B cell (primary cell): ENCODE measurements at regions of chr5 and their contacts with region 1.

Region 1: DNA sequence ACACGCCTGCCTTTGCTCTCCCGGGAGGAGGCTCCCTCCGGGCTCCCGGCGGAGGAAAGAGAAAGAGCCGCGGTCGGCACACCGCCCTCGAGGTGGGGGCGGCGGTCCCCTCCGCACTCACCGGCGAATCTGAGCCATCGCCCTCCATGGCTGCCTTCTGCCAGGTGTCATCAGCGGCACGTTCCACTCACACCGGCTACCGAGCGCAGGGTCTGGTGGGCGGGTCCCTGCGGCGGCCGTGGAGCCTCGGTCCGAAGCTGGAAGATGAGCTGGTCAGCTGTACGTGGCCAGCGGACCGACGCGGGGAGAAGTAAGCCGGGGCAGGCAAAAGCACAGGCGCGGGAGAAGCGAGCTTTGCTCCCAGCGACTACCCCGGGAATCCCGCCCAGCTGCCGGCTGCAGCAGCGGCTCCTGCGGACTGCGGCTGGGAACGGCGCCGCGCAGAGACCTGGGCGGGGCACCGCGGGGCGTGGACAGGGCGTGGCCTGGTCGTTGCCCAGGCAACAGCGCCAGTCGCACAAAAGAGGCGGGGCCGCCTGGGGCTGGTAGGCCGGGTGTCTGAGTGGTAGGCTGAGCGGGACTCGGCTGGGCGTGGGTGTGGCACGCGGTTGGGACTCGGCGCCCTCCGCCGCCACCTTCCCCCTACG is at the start of gene TRIM36:
- DNase-seq: peak; percentile 94
- ATAC-seq: peak; percentile 92
- H3K4me3 ChIP-seq: peak within 1 kb of the TSS; percentile 53 to 89 (median 75)
- H3K4me3 Mint-ChIP-seq: peak within 1 kb of the TSS; percentile 92
- H3K27ac ChIP-seq: no peak within 1 kb of the TSS
- H3K27ac Mint-ChIP-seq: peak within 1 kb of the TSS; percentile 80
- H3K4me1 ChIP-seq: peaks cover 20 to 21% of the 10 kb centered on the region in 2 donors
- H3K4me1 Mint-ChIP-seq: peaks cover 14% of the 10 kb centered on the region
- H3K27me3 ChIP-seq: peaks cover 0 to 62% (median 32%) of the 10 kb centered on the region in 4 experiments
- H3K27me3 Mint-ChIP-seq: peaks cover 59% of the 10 kb centered on the region
- CTCF ChIP-seq: no peak
- total RNA-seq, gene TRIM36: 0.39 and 1.6 TPM in 2 replicates

Region 2: GRCh38 chr5:115180165-115180709 is 10.6 kb after region 1 on chr5:
- CTCF ChIA-PET with region 1: interaction called, 3 read pairs
- POLR2A ChIA-PET with region 1: interaction called, 4 read pairs
- intact Hi-C with region 1: loop called (anchors 1 kb)
- DNase-seq: peak; percentile 71
- ATAC-seq: peak; percentile 75
- H3K4me3 ChIP-seq: peak overlapping the region; percentile 4 to 64 (median 47)
- H3K4me3 Mint-ChIP-seq: peak overlapping the region; percentile 89
- H3K27ac ChIP-seq: no peak overlapping the region
- H3K27ac Mint-ChIP-seq: no peak overlapping the region
- H3K4me1 ChIP-seq: peaks cover 19 to 27% of the 10 kb centered on the region in 2 donors
- H3K4me1 Mint-ChIP-seq: peaks cover 8% of the 10 kb centered on the region
- H3K27me3 ChIP-seq: peaks cover 5 to 87% (median 64%) of the 10 kb centered on the region in 4 experiments
- H3K27me3 Mint-ChIP-seq: peaks cover 86% of the 10 kb centered on the region
- CTCF ChIP-seq: no peak

Region 3: DNA sequence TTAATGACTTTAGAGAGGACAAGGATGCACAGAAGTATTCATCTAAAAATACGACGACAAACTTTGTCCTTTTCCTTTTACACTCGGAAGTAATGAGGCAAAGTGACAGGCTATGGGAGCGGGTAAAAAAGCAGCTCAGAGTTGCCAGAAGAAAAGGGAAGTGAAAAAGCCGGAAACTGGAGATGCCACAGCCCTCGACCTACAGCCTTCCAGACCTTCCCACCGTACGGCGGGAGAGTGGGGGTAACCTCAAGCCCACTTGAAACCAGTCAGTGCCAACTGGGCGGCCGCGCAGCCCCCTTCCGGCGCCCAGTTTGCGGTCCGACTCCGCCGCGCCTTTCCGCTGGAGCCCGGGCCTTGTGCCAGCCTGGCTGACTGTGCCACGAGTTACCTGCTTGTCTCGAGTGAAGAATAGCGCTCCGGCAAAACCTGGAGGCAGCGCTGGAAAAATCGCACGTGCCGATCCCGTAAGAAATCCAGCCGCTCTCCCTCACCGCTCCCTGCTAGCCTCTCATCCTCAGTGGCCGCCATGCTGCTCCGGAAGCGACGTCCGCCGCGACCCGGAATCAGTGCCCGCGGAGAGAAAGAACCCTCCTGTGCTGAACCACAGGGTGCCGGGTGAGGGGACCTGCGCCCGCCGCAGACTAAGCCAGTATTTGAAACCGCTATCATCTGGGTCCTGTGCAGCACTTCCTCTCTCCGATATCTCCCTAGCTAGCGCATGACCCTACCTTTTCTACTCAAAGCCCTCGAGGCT is 92.9 kb after region 1 on chr5 and contains the start of gene PGGT1B:
- CTCF ChIA-PET with region 1: interaction called, 3 read pairs
- POLR2A ChIA-PET with region 1: no interaction called
- intact Hi-C with region 1: loop called (anchors 2 kb)
- DNase-seq: peak; percentile 84
- ATAC-seq: peak; percentile 90
- H3K4me3 ChIP-seq: peak within 1 kb of the TSS; percentile 78 to 97 (median 87)
- H3K4me3 Mint-ChIP-seq: peak within 1 kb of the TSS; percentile 92
- H3K27ac ChIP-seq: peak within 1 kb of the TSS; percentile 88 to 92
- H3K27ac Mint-ChIP-seq: peak within 1 kb of the TSS; percentile 92
- H3K4me1 ChIP-seq: peaks cover 20 to 26% of the 10 kb centered on the region in 2 donors
- H3K4me1 Mint-ChIP-seq: peaks cover 49% of the 10 kb centered on the region
- H3K27me3 ChIP-seq: no peaks in the 10 kb centered on the region
- H3K27me3 Mint-ChIP-seq: no peaks in the 10 kb centered on the region
- CTCF ChIP-seq: no peak
- total RNA-seq, gene PGGT1B: 63.4 and 64.8 TPM in 2 replicates

Region 4: DNA sequence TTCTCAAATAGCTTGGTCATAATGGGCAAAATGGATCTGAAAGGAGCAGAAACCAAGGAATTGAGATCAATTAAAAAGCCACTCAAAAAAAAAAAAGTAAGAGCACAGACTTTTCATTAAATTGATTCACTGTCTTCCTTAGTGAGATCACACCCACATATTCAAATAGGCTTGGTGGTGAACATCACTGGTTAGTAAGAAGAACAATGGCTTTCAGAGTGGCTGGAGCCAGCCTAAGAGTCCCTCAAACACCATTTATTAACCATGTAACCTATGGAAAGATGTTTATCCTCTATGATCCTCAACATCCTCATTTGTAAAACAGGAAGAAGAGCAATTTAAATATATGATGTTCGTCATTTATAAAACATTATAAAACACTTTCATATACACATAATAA is 114.4 kb after region 1 on chr5:
- CTCF ChIA-PET with region 1: no interaction called
- POLR2A ChIA-PET with region 1: no interaction called
- intact Hi-C with region 1: no loop called
- DNase-seq: no peak
- ATAC-seq: no peak
- H3K4me3 ChIP-seq: no peak overlapping the region
- H3K4me3 Mint-ChIP-seq: no peak overlapping the region
- H3K27ac ChIP-seq: no peak overlapping the region
- H3K27ac Mint-ChIP-seq: no peak overlapping the region
- H3K4me1 ChIP-seq: no peaks in the 10 kb centered on the region
- H3K4me1 Mint-ChIP-seq: peaks cover 11% of the 10 kb centered on the region
- H3K27me3 ChIP-seq: no peaks in the 10 kb centered on the region
- H3K27me3 Mint-ChIP-seq: no peaks in the 10 kb centered on the region
- CTCF ChIP-seq: no peak

Region 5: GRCh38 chr5:115309751-115310370 is 140.3 kb after region 1 on chr5:
- CTCF ChIA-PET with region 1: no interaction called
- POLR2A ChIA-PET with region 1: no interaction called
- intact Hi-C with region 1: no loop called
- DNase-seq: peak; percentile 63
- ATAC-seq: peak; percentile 54
- H3K4me3 ChIP-seq: no peak overlapping the region
- H3K4me3 Mint-ChIP-seq: no peak overlapping the region
- H3K27ac ChIP-seq: no peak overlapping the region
- H3K27ac Mint-ChIP-seq: no peak overlapping the region
- H3K4me1 ChIP-seq: no peaks in the 10 kb centered on the region
- H3K4me1 Mint-ChIP-seq: no peaks in the 10 kb centered on the region
- H3K27me3 ChIP-seq: peaks cover 0 to 5% (median 3%) of the 10 kb centered on the region in 4 experiments
- H3K27me3 Mint-ChIP-seq: peaks cover 3% of the 10 kb centered on the region
- CTCF ChIP-seq: peak; percentile 89